Common myeloid progenitor, CD34-positive (primary cell): ENCODE measurements at regions of chr10 and their contacts with region 1.

Region 1: DNA sequence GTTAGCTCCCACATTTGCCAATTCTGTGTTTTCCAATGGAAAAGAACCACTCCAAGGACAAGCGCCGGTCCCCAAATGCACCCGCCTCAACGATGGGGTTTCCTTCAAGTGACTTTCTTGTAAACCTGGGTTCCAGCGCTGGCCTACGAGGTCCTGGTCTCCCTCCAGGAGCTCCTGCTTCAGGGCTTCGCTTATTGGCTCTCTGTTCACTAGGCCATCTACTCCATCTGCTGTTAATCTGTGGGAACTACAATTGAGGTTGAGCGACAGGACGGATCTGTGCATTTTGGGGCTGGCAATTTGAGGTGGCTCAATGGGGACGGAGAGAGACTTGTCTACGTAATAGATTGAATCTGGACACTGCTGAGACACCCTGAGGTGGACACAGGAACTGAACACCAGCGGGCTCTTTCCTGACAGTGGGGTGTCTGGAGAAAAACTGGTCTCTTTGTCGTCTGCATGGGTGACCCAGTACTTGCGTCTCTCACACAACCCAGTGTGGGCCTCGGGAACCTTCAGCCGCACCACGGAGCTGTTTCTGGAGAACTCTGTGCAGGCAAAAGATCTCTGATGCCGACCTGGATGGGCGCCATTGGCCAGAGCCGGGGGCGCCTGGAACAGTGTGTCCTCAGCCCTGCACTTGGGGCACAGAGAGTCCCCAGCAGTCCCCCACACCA is 115.9 kb upstream of the ADAM12 start:
- DNase-seq: peak; percentile 59 to 70 (median 63)
- H3K4me3 ChIP-seq: no peak overlapping the region
- H3K27ac ChIP-seq: no peak overlapping the region
- H3K4me1 ChIP-seq: no peaks in the 10 kb centered on the region
- H3K27me3 ChIP-seq: no peaks in the 10 kb centered on the region

Region 2: DNA sequence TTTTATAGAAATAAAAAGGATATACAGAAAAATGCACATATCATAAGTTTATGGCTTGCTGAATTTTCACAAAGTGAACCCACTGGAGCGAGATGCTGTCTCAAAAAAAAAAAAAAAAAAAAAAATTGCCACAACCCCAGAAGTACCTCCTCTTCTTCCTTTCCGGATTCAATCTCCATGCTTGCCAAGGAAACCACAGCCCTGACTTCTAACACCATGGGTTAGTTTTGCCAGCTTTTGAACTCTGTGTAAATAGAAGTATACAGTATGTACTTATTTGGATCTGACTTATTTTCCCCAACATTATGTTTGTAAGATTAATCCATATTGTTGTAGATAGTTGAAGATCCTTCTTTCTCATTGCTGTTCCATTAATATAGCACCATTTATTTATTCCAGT is 567.9 kb before region 1 on chr10:
- CTCF ChIA-PET with region 1: interaction called, 28 read pairs
- POLR2A ChIA-PET with region 1: no interaction called
- DNase-seq: peak; percentile 12 to 58 (median 54)
- H3K4me3 ChIP-seq: no peak overlapping the region
- H3K27ac ChIP-seq: no peak overlapping the region
- H3K4me1 ChIP-seq: peaks cover 0 to 4% (median 0%) of the 10 kb centered on the region in 4 experiments
- H3K27me3 ChIP-seq: peaks cover 0 to 9% (median 1%) of the 10 kb centered on the region in 5 experiments